ENCODE measurements at regions of chr12 and their contacts with region 1.

Region 1: GRCh38 chr12:90695415-90695814 is 259.6 kb downstream of the CCER1 start:
- DNase-seq: no peak
- H3K4me3 Mint-ChIP-seq: no peak overlapping the region
- H3K27ac Mint-ChIP-seq: no peak overlapping the region
- H3K4me1 Mint-ChIP-seq: no peaks in the 10 kb centered on the region
- H3K27me3 Mint-ChIP-seq: no peaks in the 10 kb centered on the region
- CTCF ChIP-seq: peak; percentile 32

Region 2: GRCh38 chr12:90216815-90217214 is 478.6 kb before region 1 on chr12:
- CTCF ChIA-PET with region 1: no interaction called
- POLR2A ChIA-PET with region 1: no interaction called
- intact Hi-C with region 1: no loop called
- DNase-seq: no peak
- H3K4me3 Mint-ChIP-seq: no peak overlapping the region
- H3K27ac Mint-ChIP-seq: no peak overlapping the region
- H3K4me1 Mint-ChIP-seq: no peaks in the 10 kb centered on the region
- H3K27me3 Mint-ChIP-seq: no peaks in the 10 kb centered on the region
- CTCF ChIP-seq: no peak

Region 3: DNA sequence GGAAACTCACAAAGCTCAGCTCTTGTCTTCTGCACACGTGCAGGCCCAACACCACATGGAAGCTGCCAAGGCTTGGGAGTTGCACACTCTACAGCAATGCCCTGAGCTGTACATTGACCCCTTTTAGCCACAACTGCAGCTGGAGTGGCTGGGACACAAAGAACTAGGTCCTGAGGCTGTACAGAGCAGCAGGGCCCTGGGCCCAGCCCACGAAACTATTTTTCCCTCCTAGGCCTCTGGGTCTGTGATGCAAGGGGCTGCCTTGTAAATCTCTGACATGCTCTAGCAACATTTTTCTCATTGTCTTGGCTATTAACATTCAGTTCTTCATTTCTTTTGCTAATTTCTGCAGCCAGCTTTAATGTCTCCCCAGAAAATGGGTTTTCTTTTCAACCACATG is 39.6 kb after region 1 on chr12:
- CTCF ChIA-PET with region 1: no interaction called
- POLR2A ChIA-PET with region 1: no interaction called
- intact Hi-C with region 1: no loop called
- DNase-seq: no peak
- H3K4me3 Mint-ChIP-seq: no peak overlapping the region
- H3K27ac Mint-ChIP-seq: no peak overlapping the region
- H3K4me1 Mint-ChIP-seq: no peaks in the 10 kb centered on the region
- H3K27me3 Mint-ChIP-seq: no peaks in the 10 kb centered on the region
- CTCF ChIP-seq: no peak

Region 4: GRCh38 chr12:90854136-90854689 is 158.8 kb after region 1 on chr12:
- CTCF ChIA-PET with region 1: interaction called, 10 read pairs
- POLR2A ChIA-PET with region 1: no interaction called
- intact Hi-C with region 1: loop called (anchors 5 kb)
- DNase-seq: peak; percentile 64
- H3K4me3 Mint-ChIP-seq: no peak overlapping the region
- H3K27ac Mint-ChIP-seq: no peak overlapping the region
- H3K4me1 Mint-ChIP-seq: no peaks in the 10 kb centered on the region
- H3K27me3 Mint-ChIP-seq: no peaks in the 10 kb centered on the region
- CTCF ChIP-seq: peak; percentile 61

Region 5: GRCh38 chr12:90909069-90909770 is 213.8 kb after region 1 on chr12:
- CTCF ChIA-PET with region 1: no interaction called
- POLR2A ChIA-PET with region 1: no interaction called
- intact Hi-C with region 1: loop called (anchors 2 kb)
- DNase-seq: peak; percentile 68
- H3K4me3 Mint-ChIP-seq: no peak overlapping the region
- H3K27ac Mint-ChIP-seq: no peak overlapping the region
- H3K4me1 Mint-ChIP-seq: peaks cover 17% of the 10 kb centered on the region
- H3K27me3 Mint-ChIP-seq: no peaks in the 10 kb centered on the region
- CTCF ChIP-seq: peak; percentile 45

Measured in MCF 10A (cell line).